Gastrocnemius medialis (tissue), 4 donors: ENCODE measurements at regions of chr13 and their contacts with region 1.

Region 1: GRCh38 chr13:27833206-27833605 is 40.9 kb downstream of the GSX1 start:
- DNase-seq: no peak
- ATAC-seq: no peak
- H3K4me3 ChIP-seq: no peak overlapping the region
- H3K27ac ChIP-seq: no peak overlapping the region
- H3K4me1 ChIP-seq: no peaks in the 10 kb centered on the region
- H3K27me3 ChIP-seq: peaks cover 4 to 14% (median 5%) of the 10 kb centered on the region in 3 donors
- CTCF ChIP-seq: no peak
- POLR2A ChIP-seq: no peak

Region 2: DNA sequence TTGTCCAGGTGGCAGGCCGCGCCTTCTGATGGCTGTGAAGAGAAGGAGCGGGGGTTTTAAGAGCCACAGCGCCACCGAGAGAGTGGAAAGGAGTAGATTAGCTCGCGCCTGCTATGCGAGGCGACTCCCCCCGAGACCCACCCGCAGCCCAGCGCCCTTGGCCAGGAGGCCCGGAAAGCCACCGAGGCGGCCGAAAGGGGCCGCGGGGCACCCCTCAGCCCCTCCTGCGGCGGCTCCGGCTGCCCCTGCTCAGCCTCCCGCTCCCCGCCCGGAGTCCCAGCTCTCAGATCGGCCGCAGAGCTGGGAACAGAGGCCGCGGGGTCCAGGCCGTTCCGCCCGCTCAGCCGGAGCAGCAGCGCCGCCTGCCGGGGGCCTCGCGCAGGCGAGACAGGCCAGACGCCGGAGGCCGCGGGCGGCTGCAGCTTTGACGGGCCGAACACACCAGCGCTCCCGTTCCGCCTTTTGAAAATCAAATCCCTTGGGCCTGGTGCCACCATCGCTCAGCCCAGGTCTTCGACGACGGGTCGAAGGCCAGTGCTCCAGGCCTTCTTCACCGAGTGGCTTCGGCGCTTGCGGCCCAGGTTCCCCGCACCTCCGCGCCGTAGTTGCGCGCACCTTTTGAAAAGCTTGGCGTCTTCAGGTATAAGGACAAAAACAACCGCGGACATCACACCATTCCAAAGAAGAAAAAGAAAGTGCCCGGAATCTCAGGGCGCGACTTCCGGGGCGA is 120.6 kb after region 1 on chr13:
- in situ Hi-C with region 1: no loop called
- intact Hi-C with region 1: loop called (anchors 2 kb)
- DNase-seq: peak in 1 of 2 donors; percentile 22
- ATAC-seq: peak; percentile 66 to 73
- H3K4me3 ChIP-seq: peak overlapping the region; percentile 40 to 67 (median 45)
- H3K27ac ChIP-seq: no peak overlapping the region
- H3K4me1 ChIP-seq: peaks cover 2 to 12% of the 10 kb centered on the region in 2 donors
- H3K27me3 ChIP-seq: peaks cover 62 to 75% (median 68%) of the 10 kb centered on the region in 3 donors
- CTCF ChIP-seq: peak; percentile 39 to 73 (median 56)
- POLR2A ChIP-seq: no peak